Astrocyte of the spinal cord (primary cell): ENCODE measurements at regions of chr1 and their contacts with region 1.

Region 1: GRCh38 chr1:205919026-205919746 is 24.1 kb downstream of the SLC26A9 start:
- DNase-seq: peak; percentile 83
- H3K4me3 ChIP-seq: no peak overlapping the region
- CTCF ChIP-seq: peak; percentile 96

Region 2: DNA sequence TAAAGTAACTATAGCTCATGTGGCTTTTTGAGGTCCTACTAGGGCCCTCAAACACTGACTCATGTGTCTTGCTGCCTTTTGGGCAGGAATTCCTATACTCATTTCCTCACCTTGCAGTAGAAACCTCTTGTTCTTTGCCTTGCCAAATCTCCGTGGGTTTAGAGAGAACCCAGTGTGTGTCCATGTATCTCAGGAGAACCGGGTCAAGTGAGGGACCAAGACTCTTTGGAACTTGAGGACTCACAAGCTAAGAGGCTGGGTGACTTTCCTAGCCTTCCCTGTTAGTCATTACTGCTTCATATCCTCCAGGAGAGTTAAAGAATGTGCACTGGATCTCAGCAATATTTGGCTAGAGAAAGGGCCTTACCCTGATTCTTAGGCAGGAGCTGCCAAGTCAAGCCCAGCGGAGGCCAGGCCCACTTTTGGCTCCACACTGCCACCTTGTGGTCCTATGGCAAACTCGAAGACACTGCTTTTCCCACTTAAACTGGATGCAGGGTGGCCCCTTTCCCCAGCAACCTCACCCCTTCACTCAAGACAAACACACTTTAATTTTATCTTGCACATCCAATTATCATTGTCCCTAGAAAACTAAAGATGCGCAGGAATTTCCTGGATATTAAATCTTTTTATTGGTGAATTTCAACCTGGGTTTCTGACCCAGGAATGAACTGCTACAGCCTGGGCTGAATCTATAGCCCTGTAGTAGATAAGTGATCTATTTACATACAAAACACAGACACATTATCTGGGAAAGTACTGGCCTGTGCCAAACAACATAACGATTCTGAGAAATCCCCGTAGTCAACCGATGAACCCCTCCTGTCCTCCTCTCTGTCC is 187.4 kb after region 1 on chr1:
- in situ Hi-C with region 1: loop called (anchors 25 kb)
- DNase-seq: peak; percentile 73
- H3K4me3 ChIP-seq: no peak overlapping the region
- CTCF ChIP-seq: peak; percentile 86